Gastrocnemius medialis (tissue), 4 donors: ENCODE measurements at regions of chr6 and their contacts with region 1.

Region 1: GRCh38 chr6:154675602-154676088 is 57.6 kb upstream of the SCAF8 start:
- DNase-seq: peak; percentile 67 to 88
- ATAC-seq: peak; percentile 100
- H3K4me3 ChIP-seq: no peak overlapping the region
- H3K27ac ChIP-seq: no peak overlapping the region
- H3K4me1 ChIP-seq: no peaks in the 10 kb centered on the region
- H3K27me3 ChIP-seq: no peaks in the 10 kb centered on the region
- CTCF ChIP-seq: peak; percentile 91 to 99 (median 95)
- POLR2A ChIP-seq: no peak

Region 2: GRCh38 chr6:154705471-154706113 is 29.9 kb after region 1 on chr6:
- in situ Hi-C with region 1: no loop called
- intact Hi-C with region 1: no loop called
- DNase-seq: no peak
- ATAC-seq: no peak
- H3K4me3 ChIP-seq: no peak overlapping the region
- H3K27ac ChIP-seq: no peak overlapping the region
- H3K4me1 ChIP-seq: no peaks in the 10 kb centered on the region
- H3K27me3 ChIP-seq: no peaks in the 10 kb centered on the region
- CTCF ChIP-seq: no peak
- POLR2A ChIP-seq: no peak

Region 3: GRCh38 chr6:154749341-154749740 is 73.7 kb after region 1 on chr6:
- in situ Hi-C with region 1: no loop called
- intact Hi-C with region 1: no loop called
- DNase-seq: no peak
- ATAC-seq: no peak
- H3K4me3 ChIP-seq: no peak overlapping the region
- H3K27ac ChIP-seq: no peak overlapping the region
- H3K4me1 ChIP-seq: peaks cover 29 to 57% of the 10 kb centered on the region in 2 donors
- H3K27me3 ChIP-seq: no peaks in the 10 kb centered on the region
- CTCF ChIP-seq: no peak
- POLR2A ChIP-seq: no peak

Region 4: GRCh38 chr6:154800338-154800737 is 124.7 kb after region 1 on chr6:
- in situ Hi-C with region 1: loop called (anchors 5 to 10 kb)
- intact Hi-C with region 1: loop called (anchors 1 kb)
- DNase-seq: no peak
- ATAC-seq: no peak
- H3K4me3 ChIP-seq: no peak overlapping the region
- H3K27ac ChIP-seq: no peak overlapping the region
- H3K4me1 ChIP-seq: peaks cover 5 to 18% of the 10 kb centered on the region in 2 donors
- H3K27me3 ChIP-seq: no peaks in the 10 kb centered on the region
- CTCF ChIP-seq: no peak
- POLR2A ChIP-seq: no peak

Region 5: GRCh38 chr6:154805288-154805911 is 129.8 kb after region 1 on chr6:
- in situ Hi-C with region 1: loop called (anchors 5 to 10 kb)
- intact Hi-C with region 1: loop called (anchors 1 kb)
- DNase-seq: no peak
- ATAC-seq: peak in 1 of 2 donors; percentile 56
- H3K4me3 ChIP-seq: no peak overlapping the region
- H3K27ac ChIP-seq: no peak overlapping the region
- H3K4me1 ChIP-seq: peaks cover 5 to 14% of the 10 kb centered on the region in 2 donors
- H3K27me3 ChIP-seq: no peaks in the 10 kb centered on the region
- CTCF ChIP-seq: peak in 4 of 5 experiments; percentile 21 to 63 (median 49)
- POLR2A ChIP-seq: no peak

Region 6: DNA sequence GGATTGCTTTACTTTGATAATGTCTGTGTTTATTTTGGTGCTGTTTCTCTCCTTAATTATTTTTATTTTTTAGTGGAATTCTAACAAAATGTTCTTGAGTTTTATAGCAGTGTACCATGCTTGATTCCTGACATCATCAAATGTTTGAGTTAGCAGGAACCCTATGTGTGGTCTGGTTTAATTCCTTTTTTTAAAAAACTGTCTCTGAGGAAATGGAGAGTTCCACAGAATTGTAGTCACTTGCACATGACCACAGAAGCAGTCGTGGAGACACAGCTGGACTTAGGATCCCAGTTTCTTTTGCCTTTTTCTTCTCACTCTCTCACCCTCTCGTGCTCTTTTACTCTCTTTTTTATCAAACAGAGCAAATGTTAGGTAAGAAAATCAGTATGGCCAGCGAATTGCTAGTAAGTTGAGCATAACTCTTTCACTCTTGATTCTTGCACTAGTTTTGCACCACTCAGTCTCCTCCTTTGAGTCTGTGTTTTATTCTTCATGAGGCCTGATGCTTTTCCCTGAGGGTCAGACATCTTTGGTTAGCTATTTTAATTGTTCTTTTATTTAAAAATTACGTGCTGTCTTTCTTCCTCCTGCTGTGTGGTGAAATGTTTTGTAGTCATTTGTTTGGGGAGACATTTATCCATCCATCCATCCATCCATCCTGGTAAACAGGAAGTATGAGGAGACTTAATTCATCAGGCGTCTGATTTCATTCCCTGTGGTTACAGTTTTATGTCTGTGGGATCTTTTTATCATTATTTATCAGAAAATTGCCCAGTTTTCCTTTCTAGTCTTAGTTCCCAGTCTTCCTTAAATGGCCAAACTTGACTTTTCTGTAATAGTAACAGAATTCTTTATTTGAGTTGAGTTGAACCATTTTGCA is 140.5 kb after region 1 on chr6:
- in situ Hi-C with region 1: no loop called
- intact Hi-C with region 1: no loop called
- DNase-seq: no peak
- ATAC-seq: no peak
- H3K4me3 ChIP-seq: no peak overlapping the region
- H3K27ac ChIP-seq: no peak overlapping the region
- H3K4me1 ChIP-seq: no peaks in the 10 kb centered on the region
- H3K27me3 ChIP-seq: no peaks in the 10 kb centered on the region
- CTCF ChIP-seq: no peak
- POLR2A ChIP-seq: no peak

Region 7: DNA sequence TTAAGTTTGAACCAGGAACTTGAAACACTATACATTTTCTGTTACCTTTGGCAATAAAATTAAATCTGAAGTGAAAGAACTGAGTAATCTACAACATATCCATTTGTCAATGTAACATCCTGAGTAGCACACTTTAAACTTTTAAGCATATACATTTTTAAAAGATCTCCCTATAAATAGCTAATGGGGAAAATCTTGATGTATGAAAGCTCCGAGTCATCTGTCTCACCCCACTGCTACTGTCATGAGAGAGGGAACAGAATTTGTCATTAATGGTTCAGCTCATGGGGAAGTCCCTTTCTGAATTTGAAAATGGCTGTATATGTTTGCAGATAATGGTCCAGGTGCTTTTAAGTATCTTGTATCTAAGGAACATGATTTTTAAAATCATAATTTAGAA is 835.2 kb after region 1 on chr6:
- in situ Hi-C with region 1: no loop called
- intact Hi-C with region 1: no loop called
- DNase-seq: no peak
- ATAC-seq: no peak
- H3K4me3 ChIP-seq: no peak overlapping the region
- H3K27ac ChIP-seq: peak overlapping the region; percentile 67 to 81 (median 71)
- H3K4me1 ChIP-seq: peaks cover 25 to 34% of the 10 kb centered on the region in 2 donors
- H3K27me3 ChIP-seq: no peaks in the 10 kb centered on the region
- CTCF ChIP-seq: no peak
- POLR2A ChIP-seq: no peak